Right ventricle myocardium superior (tissue), 1 donor: ENCODE measurements at regions of chr10 and their contacts with region 1.

Region 1: DNA sequence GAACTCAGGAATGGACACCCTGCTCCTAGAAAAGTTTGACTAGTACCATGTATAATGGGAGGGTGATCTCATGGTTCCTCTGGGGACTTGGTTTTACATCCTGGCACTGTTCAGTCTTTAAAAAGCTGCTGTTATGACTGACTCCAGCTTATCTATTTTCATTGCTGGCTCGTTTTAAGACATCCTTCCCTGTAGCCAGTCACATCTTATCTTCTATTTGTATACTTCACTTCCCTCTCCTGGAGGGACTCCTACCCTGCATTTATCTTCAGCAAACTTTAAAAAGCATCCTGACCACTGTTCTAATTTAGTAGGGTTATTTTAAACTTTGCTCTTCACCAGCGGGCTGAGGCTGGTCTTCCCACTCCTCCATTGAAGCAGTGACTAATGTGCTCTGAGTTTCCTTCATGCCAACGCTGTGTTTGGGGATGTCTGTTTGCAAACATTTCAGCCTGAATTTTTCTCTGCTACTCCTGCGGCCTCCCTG is 72.9 kb upstream of the ARMC3 start:
- DNase-seq: no peak
- ATAC-seq: peak; percentile 84

Region 2: DNA sequence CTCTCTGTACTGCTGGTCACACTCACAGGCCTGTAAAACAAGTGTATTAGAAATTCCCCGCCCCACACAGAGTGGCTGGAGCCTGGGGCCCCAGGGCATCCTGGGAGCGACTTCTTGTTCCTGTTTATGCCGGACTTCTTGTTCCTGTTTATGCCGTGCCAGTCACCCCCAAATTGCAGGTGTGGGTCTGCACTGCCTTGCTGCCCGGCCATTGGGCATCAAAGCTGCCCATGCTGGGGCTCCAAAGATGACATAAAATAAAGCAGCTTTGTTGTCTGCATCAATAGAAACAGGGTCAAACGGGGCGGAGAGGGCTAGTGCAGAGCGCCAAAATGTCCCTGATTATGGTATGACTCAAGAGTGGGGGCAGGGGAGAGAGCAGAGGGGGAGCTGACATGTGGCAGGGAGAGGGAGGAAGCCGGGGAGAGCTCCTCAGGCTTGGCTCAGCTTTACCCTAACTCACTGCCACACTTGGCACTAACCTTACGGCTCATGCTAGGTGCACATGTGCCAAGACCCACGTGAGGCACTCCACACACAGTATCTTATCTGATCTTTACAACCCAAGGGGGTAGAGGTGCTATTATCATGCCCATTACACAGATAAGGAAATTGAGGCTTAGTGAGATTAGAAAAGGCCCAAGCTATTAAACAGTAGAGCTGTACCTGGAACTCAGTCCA is 239.0 kb before region 1 on chr10:
- intact Hi-C with region 1: no loop called
- DNase-seq: peak; percentile 65
- ATAC-seq: peak; percentile 32

Region 3: DNA sequence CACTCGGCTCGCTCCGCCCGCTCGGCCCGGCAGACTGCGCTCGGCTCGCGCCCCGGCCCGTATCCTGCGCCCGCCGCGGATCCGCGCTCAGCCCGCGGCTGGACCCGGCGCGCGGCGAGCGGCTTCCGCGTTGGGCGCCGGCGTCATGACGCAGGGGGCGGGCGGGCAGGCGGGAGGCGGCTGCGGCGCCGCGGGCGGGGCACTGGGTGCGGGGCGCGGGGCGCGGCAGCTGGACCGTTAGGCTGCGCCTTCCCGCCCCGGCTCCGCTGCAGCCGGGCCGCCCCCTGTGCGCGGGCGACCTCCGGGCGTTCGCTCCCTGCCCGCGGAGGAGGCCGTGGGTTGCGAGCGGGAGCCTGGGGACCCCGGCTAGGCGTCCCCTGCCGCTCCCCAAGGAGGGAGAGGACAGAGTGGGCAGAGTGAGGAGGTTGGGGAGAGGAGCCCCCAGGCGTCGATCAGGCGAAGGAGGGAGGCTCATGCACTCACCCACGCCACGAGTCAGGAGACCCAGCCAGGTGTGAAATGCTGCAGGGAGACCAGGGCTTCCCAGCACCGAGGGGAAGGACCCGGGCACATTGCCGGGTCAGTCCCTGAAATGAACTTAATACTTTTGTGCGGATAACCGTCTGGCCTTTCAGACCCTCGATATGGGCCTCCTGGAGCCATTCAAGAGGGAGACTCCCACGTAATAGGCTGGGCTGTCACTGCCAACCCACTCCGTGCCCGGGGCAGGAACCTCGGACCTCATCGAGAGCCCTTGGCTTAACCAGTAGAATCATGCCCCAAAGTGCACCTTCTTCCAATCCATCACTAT is 140.3 kb before region 1 on chr10 and contains the start of gene PIP4K2A:
- intact Hi-C with region 1: loop called (anchors 10 kb)
- DNase-seq: peak; percentile 87
- ATAC-seq: peak; percentile 94
- total RNA-seq, gene PIP4K2A: 13.9 TPM

Region 4: DNA sequence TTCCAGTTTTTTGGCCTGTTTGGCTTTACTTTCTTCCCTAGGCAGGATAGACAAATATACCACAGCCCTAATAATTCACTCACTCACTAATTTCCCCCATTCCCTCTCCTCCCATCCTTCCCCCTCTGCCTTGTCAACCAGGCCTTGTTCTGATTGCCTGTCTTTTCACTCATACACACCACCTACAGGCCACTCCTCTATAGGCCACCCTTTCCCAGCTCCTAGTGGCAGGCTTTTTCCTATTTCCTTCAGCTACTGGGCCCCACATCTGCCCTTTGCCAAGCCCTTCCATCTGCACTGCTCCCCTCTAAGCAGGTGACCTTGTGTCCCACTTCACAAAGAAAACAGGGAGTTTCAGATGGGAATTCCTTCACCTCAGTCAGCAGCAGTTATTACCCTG is 180.6 kb after region 1 on chr10:
- intact Hi-C with region 1: no loop called
- DNase-seq: no peak
- ATAC-seq: no peak

Region 5: GRCh38 chr10:23146258-23146657 is 291.3 kb after region 1 on chr10:
- intact Hi-C with region 1: no loop called
- DNase-seq: no peak
- ATAC-seq: no peak